OCI-LY7 (cell line): ENCODE measurements at regions of chr1 and their contacts with region 1.

Region 1: GRCh38 chr1:12658531-12659453 is 14.9 kb downstream of the AADACL4 start:
- DNase-seq: peak; percentile 75
- H3K4me3 ChIP-seq: no peak overlapping the region
- H3K27ac ChIP-seq: no peak overlapping the region
- H3K4me1 ChIP-seq: no peaks in the 10 kb centered on the region
- CTCF ChIP-seq: peak; percentile 96

Region 2: GRCh38 chr1:12314333-12314903 is 344.4 kb before region 1 on chr1:
- CTCF ChIA-PET with region 1: no interaction called
- POLR2A ChIA-PET with region 1: no interaction called
- intact Hi-C with region 1: loop called (anchors 2 kb)
- DNase-seq: peak; percentile 23
- H3K4me3 ChIP-seq: no peak overlapping the region
- H3K27ac ChIP-seq: no peak overlapping the region
- H3K4me1 ChIP-seq: no peaks in the 10 kb centered on the region
- CTCF ChIP-seq: peak; percentile 84